Adrenal gland (tissue), 19 donors: ENCODE measurements at regions of chr4 and their contacts with region 1.

Region 1: DNA sequence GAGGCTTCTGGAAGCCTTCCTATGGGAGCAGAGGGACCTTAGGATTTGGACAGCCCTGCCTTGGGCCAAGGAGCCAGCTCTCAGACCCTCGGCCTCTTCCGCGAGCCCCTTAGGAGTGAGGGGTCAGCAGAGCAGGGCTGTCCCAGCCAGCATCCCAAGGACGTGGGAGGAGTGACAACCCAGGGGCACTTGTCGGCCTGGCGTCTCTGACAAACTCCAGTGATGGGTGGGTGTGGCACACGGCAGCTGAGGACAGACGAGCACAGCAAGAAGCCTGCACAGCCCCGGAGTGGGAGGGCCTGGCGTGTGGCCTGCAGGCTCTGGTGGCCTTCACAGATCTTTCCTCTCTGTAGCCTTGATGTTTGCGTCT is 11.6 kb upstream of the TNIP2 start:
- DNase-seq: peak in 1 of 7 donors; percentile 64
- H3K4me3 ChIP-seq: no peak overlapping the region
- H3K27ac ChIP-seq: no peak overlapping the region
- H3K4me1 ChIP-seq: peaks cover 4% of the 10 kb centered on the region in 2 donors
- H3K27me3 ChIP-seq: no peaks in the 10 kb centered on the region
- CTCF ChIP-seq: no peak
- POLR2A ChIP-seq: no peak

Region 2: DNA sequence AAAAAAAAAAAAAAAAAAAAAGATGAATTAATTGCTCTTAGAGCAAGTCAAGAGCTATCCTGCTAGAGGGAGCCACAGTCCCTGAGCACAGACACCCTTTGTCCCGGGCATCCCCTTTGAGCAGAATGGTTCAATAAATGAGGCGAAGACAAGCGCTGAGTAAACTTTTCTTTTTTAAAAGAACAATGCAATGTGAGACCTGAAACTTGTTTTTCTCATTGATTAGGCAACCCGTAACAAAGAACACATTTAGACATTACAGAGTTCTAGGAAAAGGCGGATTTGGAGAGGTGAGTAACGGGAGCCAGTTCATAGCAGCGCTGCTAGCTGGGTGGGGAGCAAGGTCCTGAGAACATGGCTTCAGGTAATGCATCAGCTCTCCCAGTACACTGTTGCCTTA is 241.7 kb after region 1 on chr4:
- intact Hi-C with region 1: no loop called
- DNase-seq: no peak
- H3K4me3 ChIP-seq: no peak overlapping the region
- H3K27ac ChIP-seq: no peak overlapping the region
- H3K4me1 ChIP-seq: peaks cover 0 to 12% of the 10 kb centered on the region in 2 donors
- H3K27me3 ChIP-seq: no peaks in the 10 kb centered on the region
- CTCF ChIP-seq: no peak
- POLR2A ChIP-seq: no peak

Region 3: DNA sequence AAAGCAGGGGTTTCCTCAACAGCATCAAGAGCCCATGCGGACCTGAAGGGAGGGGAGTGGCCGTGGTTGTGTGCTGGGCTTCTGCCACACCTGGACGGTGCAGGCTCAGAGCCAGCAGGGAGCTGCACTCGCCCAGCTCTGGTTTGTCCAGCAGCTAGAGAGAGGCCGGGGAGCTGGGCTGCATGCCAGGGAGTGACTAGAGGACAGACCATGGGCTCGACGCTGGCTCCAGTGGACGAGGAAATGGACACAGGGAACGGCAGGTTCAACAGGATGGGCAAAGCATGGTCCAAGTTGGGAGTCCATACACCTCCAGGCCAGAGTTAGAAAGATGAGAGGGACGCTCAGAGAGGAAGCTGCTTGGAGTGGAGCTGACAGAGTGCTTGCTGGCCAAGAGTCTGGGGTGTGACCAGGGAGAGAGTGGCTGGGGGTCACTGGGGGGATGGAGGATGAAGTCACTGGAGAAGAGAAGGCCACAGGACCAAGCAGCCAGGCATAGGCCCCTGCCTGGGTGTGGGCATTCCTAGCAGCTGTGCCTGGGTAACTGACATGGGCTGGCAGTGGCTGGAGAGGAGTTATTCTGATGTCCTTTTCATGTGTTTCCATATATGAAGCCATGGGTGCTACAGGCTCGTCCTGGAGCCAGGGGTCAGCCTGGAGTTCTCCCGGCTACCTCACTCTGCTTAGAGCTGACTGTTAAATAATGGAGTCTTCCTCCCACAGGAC is 263.8 kb after region 1 on chr4:
- intact Hi-C with region 1: loop called (anchors 5 to 10 kb)
- DNase-seq: peak in 3 of 7 donors; percentile 25 to 48 (median 43)
- H3K4me3 ChIP-seq: no peak overlapping the region
- H3K27ac ChIP-seq: no peak overlapping the region
- H3K4me1 ChIP-seq: no peaks in the 10 kb centered on the region
- H3K27me3 ChIP-seq: no peaks in the 10 kb centered on the region
- CTCF ChIP-seq: no peak
- POLR2A ChIP-seq: no peak